Tibial artery (tissue), 4 donors: ENCODE measurements at regions of chr15 and their contacts with region 1.

Region 1: GRCh38 chr15:33926260-33926659 is 42.0 kb upstream of the CHRM5 start:
- DNase-seq: no peak
- H3K4me3 ChIP-seq: no peak overlapping the region
- H3K27ac ChIP-seq: no peak overlapping the region
- H3K4me1 ChIP-seq: no peaks in the 10 kb centered on the region
- H3K27me3 ChIP-seq: no peaks in the 10 kb centered on the region
- CTCF ChIP-seq: no peak

Region 2: DNA sequence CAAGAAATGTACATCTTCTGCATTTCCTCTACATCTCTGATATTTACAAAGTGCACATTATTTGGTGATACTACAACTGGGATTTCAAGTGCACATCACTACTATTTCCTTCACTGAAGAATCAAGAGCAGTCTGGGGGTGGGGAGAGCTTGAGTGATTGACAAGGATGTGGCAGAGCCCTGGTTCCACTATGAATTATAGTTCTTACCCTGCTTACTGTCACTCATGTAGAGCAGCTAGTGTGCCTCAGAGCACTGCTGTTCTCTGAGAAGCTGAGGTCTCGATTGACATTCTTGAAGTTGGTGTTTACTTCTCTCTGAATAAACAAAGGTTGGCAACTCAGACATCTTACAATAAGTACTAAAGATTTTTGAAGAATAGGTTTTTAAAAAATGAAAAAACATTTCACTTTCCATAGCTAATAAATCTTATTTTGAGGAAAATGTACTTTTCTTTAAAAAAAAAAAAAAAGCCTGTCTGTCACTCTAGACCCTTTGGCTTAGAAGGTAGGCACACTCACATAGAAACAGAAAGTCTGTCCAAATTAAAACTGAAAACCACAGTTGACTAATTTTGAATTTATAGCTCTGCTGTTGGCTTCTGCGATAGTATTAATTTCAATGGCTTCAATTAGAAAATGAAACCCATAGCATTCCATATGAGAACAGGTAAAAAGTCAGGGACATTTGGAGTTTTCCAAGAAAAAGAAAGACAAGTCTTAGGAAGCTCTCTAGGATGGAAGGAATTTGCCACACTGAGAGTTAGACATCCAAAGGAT is 1202.9 kb before region 1 on chr15:
- intact Hi-C with region 1: loop called (anchors 5 kb)
- DNase-seq: no peak
- H3K4me3 ChIP-seq: no peak overlapping the region
- H3K27ac ChIP-seq: no peak overlapping the region
- H3K4me1 ChIP-seq: peaks cover 0 to 11% (median 9%) of the 10 kb centered on the region in 4 donors
- H3K27me3 ChIP-seq: peaks cover 0 to 30% of the 10 kb centered on the region in 2 donors
- CTCF ChIP-seq: no peak

Region 3: DNA sequence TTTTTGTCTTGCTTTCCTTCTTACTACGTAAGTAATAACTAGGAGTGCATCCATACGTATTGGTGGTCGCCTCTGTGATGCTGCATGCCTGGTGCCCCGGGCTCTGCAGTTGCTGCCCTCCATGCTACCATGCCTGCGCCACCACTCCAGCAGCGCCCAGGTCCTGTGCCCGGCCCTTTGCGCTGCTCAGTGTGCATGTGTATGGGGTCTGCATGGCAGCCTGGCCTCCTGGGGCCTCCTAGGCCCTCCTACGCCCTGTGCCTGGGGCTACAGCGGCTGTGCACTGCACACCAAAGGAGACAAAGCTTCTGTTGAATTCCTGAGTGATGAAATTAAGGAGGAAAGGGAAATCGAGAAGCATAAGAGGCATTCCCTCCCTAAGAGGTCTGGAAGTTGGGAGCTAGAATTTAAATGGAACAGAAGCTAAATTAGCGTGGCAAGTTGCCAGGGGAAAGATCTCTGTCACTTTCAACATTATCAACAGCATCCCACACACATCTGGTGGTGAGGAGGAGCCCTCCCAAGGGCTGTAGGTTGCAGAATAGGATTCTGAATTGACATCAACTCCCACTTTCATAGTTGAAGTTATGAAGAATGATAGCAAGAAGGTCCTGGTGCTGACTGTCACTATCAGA is 233.0 kb before region 1 on chr15:
- intact Hi-C with region 1: no loop called
- DNase-seq: no peak
- H3K4me3 ChIP-seq: no peak overlapping the region
- H3K27ac ChIP-seq: no peak overlapping the region
- H3K4me1 ChIP-seq: no peaks in the 10 kb centered on the region
- H3K27me3 ChIP-seq: no peaks in the 10 kb centered on the region
- CTCF ChIP-seq: no peak

Region 4: DNA sequence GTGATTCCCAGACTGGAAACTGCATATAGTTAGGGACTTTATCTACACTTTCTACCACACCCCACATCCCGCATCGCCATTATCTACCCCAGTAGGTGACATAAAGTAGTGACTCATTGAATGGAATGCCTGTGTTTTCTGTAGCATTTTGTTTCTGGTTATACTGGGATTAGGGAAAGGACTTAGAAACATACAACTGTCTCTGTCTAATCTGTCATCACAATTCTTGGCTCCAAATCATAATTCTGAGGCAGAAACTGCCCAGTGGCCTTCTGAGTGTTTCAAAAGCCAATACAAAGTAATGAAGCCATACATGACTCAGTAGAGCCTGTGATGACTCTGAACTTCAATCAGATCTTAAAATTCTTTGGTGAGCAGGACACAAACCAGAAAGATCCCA is 73.7 kb before region 1 on chr15:
- intact Hi-C with region 1: no loop called
- DNase-seq: no peak
- H3K4me3 ChIP-seq: no peak overlapping the region
- H3K27ac ChIP-seq: no peak overlapping the region
- H3K4me1 ChIP-seq: no peaks in the 10 kb centered on the region
- H3K27me3 ChIP-seq: no peaks in the 10 kb centered on the region
- CTCF ChIP-seq: no peak

Region 5: GRCh38 chr15:34342737-34343575 is 416.7 kb after region 1 on chr15 and contains the starts of genes NOP10 and NUTM1:
- intact Hi-C with region 1: no loop called
- DNase-seq: peak; percentile 89 to 93
- H3K4me3 ChIP-seq: peak within 1 kb of the TSS; percentile 74 to 77
- H3K27ac ChIP-seq: peak within 1 kb of the TSS; percentile 84 to 90
- H3K4me1 ChIP-seq: peaks cover 0 to 15% (median 11%) of the 10 kb centered on the region in 4 donors
- H3K27me3 ChIP-seq: no peaks in the 10 kb centered on the region
- CTCF ChIP-seq: peak; percentile 92 to 94